MCF 10A (cell line): ENCODE measurements at regions of chr12 and their contacts with region 1.

Region 1: GRCh38 chr12:103548622-103549601 is 38.2 kb upstream of the STAB2 start:
- DNase-seq: peak; percentile 82
- H3K4me3 Mint-ChIP-seq: no peak overlapping the region
- H3K27ac Mint-ChIP-seq: no peak overlapping the region
- H3K4me1 Mint-ChIP-seq: no peaks in the 10 kb centered on the region
- H3K27me3 Mint-ChIP-seq: no peaks in the 10 kb centered on the region
- CTCF ChIP-seq: peak; percentile 93

Region 2: DNA sequence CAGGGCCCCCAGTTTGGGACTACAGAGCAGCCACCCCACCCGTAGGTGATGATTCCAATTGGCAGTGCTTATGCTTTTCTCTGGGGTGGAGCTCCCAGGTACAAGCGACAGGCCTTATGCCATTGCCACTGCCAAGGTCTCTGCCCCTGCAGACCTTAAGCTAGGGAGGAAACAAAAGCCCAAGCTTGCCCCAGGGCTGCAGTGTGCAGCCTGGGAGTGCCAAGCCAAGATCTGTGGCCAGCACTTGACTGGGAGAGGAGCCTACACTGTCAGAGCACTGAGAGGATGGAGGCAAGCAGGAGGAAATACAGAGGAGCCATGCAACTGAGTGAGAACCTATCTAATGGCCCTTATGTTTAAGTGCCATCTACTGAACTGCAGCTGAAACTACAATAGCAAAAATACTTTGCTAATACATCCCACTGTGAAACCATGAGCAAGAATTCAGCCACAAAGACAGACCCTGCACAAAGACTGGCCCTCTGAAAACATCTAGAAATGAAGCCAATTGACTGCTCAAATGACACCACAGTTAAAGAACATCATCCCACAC is 609.2 kb before region 1 on chr12:
- CTCF ChIA-PET with region 1: interaction called, 157 read pairs
- POLR2A ChIA-PET with region 1: no interaction called
- intact Hi-C with region 1: no loop called
- DNase-seq: no peak
- H3K4me3 Mint-ChIP-seq: no peak overlapping the region
- H3K27ac Mint-ChIP-seq: no peak overlapping the region
- H3K4me1 Mint-ChIP-seq: no peaks in the 10 kb centered on the region
- H3K27me3 Mint-ChIP-seq: no peaks in the 10 kb centered on the region
- CTCF ChIP-seq: no peak

Region 3: DNA sequence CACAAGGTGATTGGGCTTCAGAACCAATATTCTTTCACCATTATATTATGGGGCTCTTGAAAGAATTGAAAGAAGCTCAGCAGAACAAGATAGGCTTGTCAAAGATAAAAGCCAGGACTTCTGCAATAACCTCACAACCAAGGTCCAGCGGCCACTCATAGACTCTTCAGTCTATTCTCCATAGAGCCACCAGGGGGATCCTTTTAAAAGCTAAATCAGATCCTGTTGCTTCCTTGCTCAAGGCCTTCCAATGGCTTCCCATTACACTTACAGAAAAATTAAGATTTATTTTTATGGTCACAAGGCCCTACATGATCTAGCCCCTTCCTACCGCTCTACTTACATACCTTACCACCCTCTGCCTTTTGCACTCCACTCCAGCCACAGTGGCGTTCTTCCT is 222.7 kb before region 1 on chr12:
- CTCF ChIA-PET with region 1: interaction called, 3 read pairs
- POLR2A ChIA-PET with region 1: no interaction called
- intact Hi-C with region 1: loop called (anchors 1 kb)
- DNase-seq: peak; percentile 38
- H3K4me3 Mint-ChIP-seq: no peak overlapping the region
- H3K27ac Mint-ChIP-seq: no peak overlapping the region
- H3K4me1 Mint-ChIP-seq: no peaks in the 10 kb centered on the region
- H3K27me3 Mint-ChIP-seq: no peaks in the 10 kb centered on the region
- CTCF ChIP-seq: peak; percentile 20

Region 4: DNA sequence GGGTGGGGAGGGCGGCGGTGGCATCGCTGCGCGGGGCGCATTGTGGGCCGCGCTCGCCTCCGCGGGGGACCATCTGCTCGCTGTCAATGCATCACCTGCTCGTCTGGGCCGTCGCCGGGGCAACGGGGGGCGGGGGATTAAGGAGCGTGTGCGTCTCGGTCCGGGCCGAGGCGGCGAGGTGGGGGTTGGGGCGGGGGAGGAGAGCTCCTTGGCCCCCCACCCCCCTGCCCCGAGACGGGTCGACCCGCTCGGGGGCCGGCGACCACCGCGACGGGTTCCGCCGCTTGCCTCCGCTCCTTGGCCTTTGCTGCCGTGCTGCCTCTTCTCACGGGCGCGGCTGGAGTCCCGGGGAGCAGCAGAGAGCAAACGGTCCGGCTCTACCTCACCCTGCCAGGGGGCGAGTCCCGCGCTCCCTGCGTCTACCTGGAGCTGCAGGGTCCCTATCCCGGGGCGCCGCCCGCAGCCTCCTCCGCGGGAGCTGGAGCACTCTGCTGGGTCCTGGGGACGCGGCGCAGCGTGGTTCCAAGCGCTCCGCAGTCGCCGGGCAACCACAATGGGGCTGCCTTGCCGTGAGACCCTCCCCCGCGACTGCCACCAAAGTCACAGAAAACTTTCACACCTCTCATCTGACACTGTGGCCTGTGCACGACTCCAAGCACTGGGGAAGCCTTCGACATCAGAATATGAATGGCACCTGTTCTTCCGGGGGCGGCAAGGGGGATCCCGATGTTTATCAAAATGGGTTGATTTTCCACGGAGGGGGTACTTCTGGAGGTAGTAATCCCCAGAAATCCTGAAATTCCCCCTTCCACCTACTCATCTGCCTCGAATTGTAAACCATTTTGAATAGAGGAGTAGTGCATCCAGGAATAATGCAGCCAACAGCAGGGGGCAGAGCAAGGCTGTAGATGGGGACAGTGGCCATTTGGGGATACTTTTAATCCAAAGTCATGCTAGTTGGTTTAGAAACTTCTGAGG is 53.1 kb before region 1 on chr12 and contains the start of gene C12orf42:
- CTCF ChIA-PET with region 1: interaction called, 62 read pairs
- POLR2A ChIA-PET with region 1: no interaction called
- intact Hi-C with region 1: loop called (anchors 1 kb)
- DNase-seq: peak; percentile 58
- H3K4me3 Mint-ChIP-seq: peak within 1 kb of the TSS; percentile 70
- H3K27ac Mint-ChIP-seq: no peak within 1 kb of the TSS
- H3K4me1 Mint-ChIP-seq: peaks cover 6% of the 10 kb centered on the region
- H3K27me3 Mint-ChIP-seq: no peaks in the 10 kb centered on the region
- CTCF ChIP-seq: peak; percentile 55
- total RNA-seq, gene C12orf42: not detected in 2 replicates

Region 5: DNA sequence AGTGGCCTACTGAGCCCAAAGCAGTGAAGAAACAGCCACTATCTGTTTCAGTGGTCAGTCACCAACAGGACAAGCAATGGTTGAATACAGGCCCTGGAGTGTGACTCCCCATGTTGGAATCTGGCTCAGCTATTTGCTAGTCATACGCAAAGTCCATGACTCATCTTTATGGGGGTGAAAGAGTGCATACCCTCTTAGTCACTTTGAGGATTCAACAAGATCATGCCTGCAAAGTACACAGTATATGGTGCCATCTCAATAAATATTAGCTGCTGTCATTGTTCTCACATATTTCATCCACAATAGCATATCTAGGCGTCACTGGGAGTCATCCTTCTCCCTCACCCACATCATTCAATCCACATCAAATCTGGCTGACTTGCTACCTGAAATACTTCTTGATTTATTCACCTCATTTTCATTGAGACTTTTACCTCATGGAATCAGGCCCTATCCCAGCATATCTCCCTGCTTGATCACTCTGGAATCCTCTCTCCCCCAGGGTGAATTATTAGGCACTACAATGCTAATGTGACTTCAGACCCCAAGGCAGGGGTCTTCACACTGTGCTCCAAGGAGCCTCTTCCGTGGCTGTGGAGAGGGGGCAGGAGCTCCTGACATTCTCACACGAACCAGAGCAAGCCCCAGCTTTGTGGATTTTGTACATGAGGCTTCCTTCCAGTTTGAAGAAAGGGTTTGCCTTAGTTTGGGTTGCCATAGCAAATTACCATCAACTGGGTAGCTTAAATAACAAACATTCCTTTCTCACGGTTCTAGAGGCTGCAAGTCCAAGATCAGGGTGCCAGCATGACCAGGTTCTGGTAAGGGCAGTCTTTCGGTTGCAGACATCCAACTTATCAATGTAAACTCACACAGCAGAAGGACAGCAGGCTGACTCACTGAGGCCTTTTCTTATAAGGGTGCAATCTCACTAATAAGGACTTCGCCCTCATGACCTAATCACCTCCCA is 12.0 kb after region 1 on chr12:
- CTCF ChIA-PET with region 1: interaction called, 48 read pairs
- POLR2A ChIA-PET with region 1: interaction called, 6 read pairs
- intact Hi-C with region 1: no loop called
- DNase-seq: peak; percentile 95
- H3K4me3 Mint-ChIP-seq: no peak overlapping the region
- H3K27ac Mint-ChIP-seq: peak overlapping the region; percentile 85
- H3K4me1 Mint-ChIP-seq: peaks cover 18% of the 10 kb centered on the region
- H3K27me3 Mint-ChIP-seq: no peaks in the 10 kb centered on the region
- CTCF ChIP-seq: no peak